ENCODE measurements at regions of chr6 and their contacts with region 1.

Region 1: GRCh38 chr6:104525677-104526312 is 333.9 kb downstream of the HACE1 start:
- DNase-seq: peak; percentile 91
- H3K4me3 ChIP-seq: peak overlapping the region; percentile 41
- H3K27ac ChIP-seq: no peak overlapping the region
- H3K4me1 ChIP-seq: peaks cover 7% of the 10 kb centered on the region
- H3K27me3 ChIP-seq: no peaks in the 10 kb centered on the region
- CTCF ChIP-seq: peak; percentile 93

Region 2: GRCh38 chr6:104682722-104683643 is 157.2 kb after region 1 on chr6:
- CTCF ChIA-PET with region 1: no interaction called
- POLR2A ChIA-PET with region 1: no interaction called
- intact Hi-C with region 1: loop called (anchors 5 kb)
- DNase-seq: peak; percentile 82
- H3K4me3 ChIP-seq: no peak overlapping the region
- H3K27ac ChIP-seq: no peak overlapping the region
- H3K4me1 ChIP-seq: peaks cover 4% of the 10 kb centered on the region
- H3K27me3 ChIP-seq: no peaks in the 10 kb centered on the region
- CTCF ChIP-seq: peak; percentile 97

Measured in A673 (cell line).